Activated naive CD4-positive, alpha-beta T cell treated with anti-CD3 and anti-CD28 coated beads for 36 hours (primary cell): ENCODE measurements at regions of chr6 and their contacts with region 1.

Region 1: GRCh38 chr6:106085984-106086813 is at the start of gene PRDM1:
- DNase-seq: peak; percentile 87
- H3K4me3 Mint-ChIP-seq: peak within 1 kb of the TSS; percentile 75
- H3K27ac Mint-ChIP-seq: peak within 1 kb of the TSS; percentile 6
- H3K4me1 Mint-ChIP-seq: peaks cover 51% of the 10 kb centered on the region
- H3K27me3 Mint-ChIP-seq: peaks cover 46% of the 10 kb centered on the region
- total RNA-seq, gene PRDM1: 3.4 to 4.0 TPM

Region 2: GRCh38 chr6:105484238-105485161 is 601.7 kb before region 1 on chr6:
- CTCF ChIA-PET with region 1: no interaction called
- intact Hi-C with region 1: loop called (anchors 1 kb)
- DNase-seq: no peak
- H3K4me3 Mint-ChIP-seq: no peak overlapping the region
- H3K27ac Mint-ChIP-seq: no peak overlapping the region
- H3K4me1 Mint-ChIP-seq: no peaks in the 10 kb centered on the region
- H3K27me3 Mint-ChIP-seq: peaks cover 18% of the 10 kb centered on the region

Region 3: GRCh38 chr6:105733565-105734162 is 352.5 kb before region 1 on chr6:
- CTCF ChIA-PET with region 1: interaction called, 3 read pairs
- intact Hi-C with region 1: loop called (anchors 2 kb)
- DNase-seq: no peak
- H3K4me3 Mint-ChIP-seq: no peak overlapping the region
- H3K27ac Mint-ChIP-seq: no peak overlapping the region
- H3K4me1 Mint-ChIP-seq: peaks cover 3% of the 10 kb centered on the region
- H3K27me3 Mint-ChIP-seq: no peaks in the 10 kb centered on the region

Region 4: GRCh38 chr6:105880030-105880492 is 206.1 kb before region 1 on chr6:
- CTCF ChIA-PET with region 1: no interaction called
- intact Hi-C with region 1: loop called (anchors 2 kb)
- DNase-seq: peak; percentile 74
- H3K4me3 Mint-ChIP-seq: peak overlapping the region; percentile 11
- H3K27ac Mint-ChIP-seq: peak overlapping the region; percentile 78
- H3K4me1 Mint-ChIP-seq: peaks cover 25% of the 10 kb centered on the region
- H3K27me3 Mint-ChIP-seq: peaks cover 30% of the 10 kb centered on the region

Region 5: GRCh38 chr6:106300944-106301343 is 214.7 kb after region 1 on chr6:
- CTCF ChIA-PET with region 1: interaction called, 3 read pairs
- intact Hi-C with region 1: loop called (anchors 1 kb)
- DNase-seq: no peak
- H3K4me3 Mint-ChIP-seq: no peak overlapping the region
- H3K27ac Mint-ChIP-seq: no peak overlapping the region
- H3K4me1 Mint-ChIP-seq: no peaks in the 10 kb centered on the region
- H3K27me3 Mint-ChIP-seq: no peaks in the 10 kb centered on the region